GM12878 (cell line): ENCODE measurements at regions of chrX and their contacts with region 1.

Region 1: DNA sequence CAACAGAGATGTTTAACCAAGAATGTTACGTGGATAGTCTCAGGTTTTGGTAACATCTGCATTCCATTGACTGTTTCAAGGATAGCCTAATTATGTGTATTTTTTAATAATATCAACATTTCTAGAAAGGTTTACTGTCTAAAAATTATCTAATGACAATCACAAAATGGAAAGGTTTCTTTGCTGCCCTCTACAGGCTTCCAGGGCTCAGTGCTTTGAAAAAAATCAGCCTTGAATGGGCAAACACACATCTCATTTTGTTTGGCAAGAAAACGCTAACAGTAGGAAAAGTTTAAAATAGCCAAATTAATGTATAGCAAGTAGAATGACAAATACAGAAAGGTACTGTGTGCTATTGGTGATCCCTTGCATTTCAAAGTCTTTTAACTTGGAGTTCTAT is 223.4 kb upstream of the PRPS2 start:
- DNase-seq: no peak
- ATAC-seq: 0 out of 3 replicates have a peak, but pooled peaks have one; percentile 18
- H3K4me3 ChIP-seq: no peak overlapping the region
- H3K27ac ChIP-seq: no peak overlapping the region
- H3K4me1 ChIP-seq: no peaks in the 10 kb centered on the region; the same call in 1 of the 2 replicates
- H3K27me3 ChIP-seq: no peaks in the 10 kb centered on the region; a peak in 1 of 4 replicates
- CTCF ChIP-seq: peak; percentile 65 to 74 (median 67)
- EP300 ChIP-seq: no peak
- POLR2A ChIP-seq: no peak
- RAD21 ChIP-seq: peak; percentile 56

Region 2: GRCh38 chrX:12080265-12080664 is 487.6 kb before region 1 on chrX:
- CTCF ChIA-PET with region 1: interaction called, 6 read pairs
- POLR2A ChIA-PET with region 1: no interaction called
- RAD21 ChIA-PET with region 1: no interaction called
- SMC1A ChIA-PET with region 1: no interaction called
- in situ Hi-C with region 1: no loop called
- intact Hi-C with region 1: loop called (anchors 10 kb)
- DNase-seq: no peak
- ATAC-seq: peak; percentile 66
- H3K4me3 ChIP-seq: no peak overlapping the region
- H3K27ac ChIP-seq: no peak overlapping the region
- H3K4me1 ChIP-seq: no peaks in the 10 kb centered on the region
- H3K27me3 ChIP-seq: no peaks in the 10 kb centered on the region; a peak in 1 of 4 replicates
- CTCF ChIP-seq: peak; percentile 49 to 55 (median 54); a peak in 5 of 6 replicates
- EP300 ChIP-seq: no peak
- POLR2A ChIP-seq: no peak
- RAD21 ChIP-seq: peak; percentile 76

Region 3: DNA sequence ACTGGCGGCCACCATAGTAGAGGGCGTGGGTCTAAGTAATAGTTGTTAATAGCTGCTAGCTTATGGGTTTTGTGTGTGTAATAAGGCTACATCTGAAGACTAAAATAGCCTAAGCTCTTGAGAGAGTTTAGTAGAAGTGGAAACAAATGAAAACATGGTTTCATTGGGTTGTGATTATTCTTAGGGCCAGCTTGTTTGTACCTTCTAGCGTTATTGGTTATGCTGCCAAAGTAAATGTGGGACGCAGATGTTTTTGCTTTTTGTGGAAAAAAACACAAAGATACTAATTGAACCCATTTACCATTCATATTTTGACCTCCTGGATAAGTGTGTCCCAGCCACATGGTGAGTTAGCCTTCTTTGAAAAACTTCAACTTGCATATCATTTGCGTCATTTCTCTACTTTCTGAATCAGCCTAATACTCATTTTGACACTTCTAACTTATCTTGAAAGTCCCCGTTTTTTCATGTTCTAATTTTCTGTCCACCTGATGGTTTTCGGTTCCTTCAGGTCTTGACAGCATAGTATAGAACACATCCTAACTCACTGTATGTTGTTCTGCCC is 124.2 kb before region 1 on chrX:
- CTCF ChIA-PET with region 1: no interaction called
- POLR2A ChIA-PET with region 1: no interaction called
- RAD21 ChIA-PET with region 1: no interaction called
- SMC1A ChIA-PET with region 1: no interaction called
- in situ Hi-C with region 1: no loop called
- intact Hi-C with region 1: loop called (anchors 5 kb)
- DNase-seq: peak; percentile 60
- ATAC-seq: peak; percentile 95
- H3K4me3 ChIP-seq: no peak overlapping the region
- H3K27ac ChIP-seq: peak overlapping the region; percentile 9; the same call in 1 of the 2 replicates
- H3K4me1 ChIP-seq: 0 out of 2 replicates have a peak, but pooled peaks cover 3% of the 10 kb centered on the region
- H3K27me3 ChIP-seq: peaks cover 1 to 7% of the 10 kb centered on the region in 2 experiments; a peak in 3 of 4 replicates
- CTCF ChIP-seq: no peak
- EP300 ChIP-seq: peak; percentile 78 to 96
- POLR2A ChIP-seq: no peak
- RAD21 ChIP-seq: no peak

Region 4: GRCh38 chrX:12497832-12498591 is 69.8 kb before region 1 on chrX:
- CTCF ChIA-PET with region 1: interaction called, 5 read pairs
- POLR2A ChIA-PET with region 1: no interaction called
- RAD21 ChIA-PET with region 1: interaction called, 4 read pairs
- SMC1A ChIA-PET with region 1: interaction called, 6 read pairs
- in situ Hi-C with region 1: no loop called
- intact Hi-C with region 1: loop called (anchors 5 kb)
- DNase-seq: no peak
- ATAC-seq: peak; percentile 93
- H3K4me3 ChIP-seq: no peak overlapping the region
- H3K27ac ChIP-seq: no peak overlapping the region
- H3K4me1 ChIP-seq: no peaks in the 10 kb centered on the region; the same call in 1 of the 2 replicates
- H3K27me3 ChIP-seq: no peaks in the 10 kb centered on the region
- CTCF ChIP-seq: peak; percentile 56 to 76 (median 69)
- EP300 ChIP-seq: no peak
- POLR2A ChIP-seq: no peak
- RAD21 ChIP-seq: peak; percentile 54